Activated CD4-positive, alpha-beta memory T cell treated with anti-CD3 and anti-CD28 coated beads for 36 hours (primary cell): ENCODE measurements at regions of chr7 and their contacts with region 1.

Region 1: DNA sequence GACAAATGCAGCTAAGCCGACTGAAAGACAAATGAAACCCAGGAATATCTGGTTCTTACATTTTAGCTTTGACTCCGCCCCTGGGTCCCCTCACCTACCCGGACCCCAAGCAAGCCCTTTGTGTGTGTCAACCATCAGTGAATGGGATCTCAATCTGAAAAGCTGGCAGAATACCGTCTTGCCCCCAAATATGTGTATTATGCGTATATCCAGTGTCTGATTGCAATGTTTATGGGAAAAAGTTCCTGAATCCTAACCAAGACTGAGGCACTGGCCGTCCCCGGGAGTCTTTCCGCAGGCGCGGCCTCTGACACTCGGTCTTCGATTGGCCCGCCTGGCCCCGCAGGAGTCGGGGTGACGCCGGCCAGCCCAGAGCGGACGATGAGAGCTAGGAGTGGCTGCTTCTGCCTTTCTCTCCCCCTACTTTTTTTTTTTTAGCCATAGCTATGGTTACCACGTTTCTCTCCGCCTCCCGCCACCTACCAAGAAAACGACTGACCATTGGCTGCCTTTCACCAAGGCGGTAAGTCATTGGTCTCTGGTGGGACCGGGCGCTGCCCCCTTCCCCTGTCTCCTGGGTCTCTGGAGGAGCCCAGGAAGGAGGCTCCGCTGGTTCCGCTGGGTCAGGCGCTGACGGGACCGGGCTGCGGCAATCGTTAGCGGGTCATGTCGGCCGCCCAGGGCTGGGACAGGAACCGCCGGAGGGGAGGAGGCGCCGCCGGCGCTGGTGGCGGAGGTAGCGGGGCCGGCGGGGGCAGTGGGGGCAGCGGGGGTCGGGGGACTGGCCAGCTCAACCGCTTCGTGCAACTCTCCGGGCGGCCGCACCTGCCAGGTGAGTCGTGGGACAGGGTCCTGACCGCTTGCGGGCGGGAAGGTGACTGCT is at the start of gene KLHDC10:
- DNase-seq: peak; percentile 97
- H3K4me3 Mint-ChIP-seq: peak within 1 kb of the TSS; percentile 75
- H3K27ac Mint-ChIP-seq: peak within 1 kb of the TSS; percentile 66
- H3K4me1 Mint-ChIP-seq: peaks cover 31% of the 10 kb centered on the region
- H3K27me3 Mint-ChIP-seq: no peaks in the 10 kb centered on the region
- total RNA-seq, gene KLHDC10: 16.4 to 16.8 TPM

Region 2: DNA sequence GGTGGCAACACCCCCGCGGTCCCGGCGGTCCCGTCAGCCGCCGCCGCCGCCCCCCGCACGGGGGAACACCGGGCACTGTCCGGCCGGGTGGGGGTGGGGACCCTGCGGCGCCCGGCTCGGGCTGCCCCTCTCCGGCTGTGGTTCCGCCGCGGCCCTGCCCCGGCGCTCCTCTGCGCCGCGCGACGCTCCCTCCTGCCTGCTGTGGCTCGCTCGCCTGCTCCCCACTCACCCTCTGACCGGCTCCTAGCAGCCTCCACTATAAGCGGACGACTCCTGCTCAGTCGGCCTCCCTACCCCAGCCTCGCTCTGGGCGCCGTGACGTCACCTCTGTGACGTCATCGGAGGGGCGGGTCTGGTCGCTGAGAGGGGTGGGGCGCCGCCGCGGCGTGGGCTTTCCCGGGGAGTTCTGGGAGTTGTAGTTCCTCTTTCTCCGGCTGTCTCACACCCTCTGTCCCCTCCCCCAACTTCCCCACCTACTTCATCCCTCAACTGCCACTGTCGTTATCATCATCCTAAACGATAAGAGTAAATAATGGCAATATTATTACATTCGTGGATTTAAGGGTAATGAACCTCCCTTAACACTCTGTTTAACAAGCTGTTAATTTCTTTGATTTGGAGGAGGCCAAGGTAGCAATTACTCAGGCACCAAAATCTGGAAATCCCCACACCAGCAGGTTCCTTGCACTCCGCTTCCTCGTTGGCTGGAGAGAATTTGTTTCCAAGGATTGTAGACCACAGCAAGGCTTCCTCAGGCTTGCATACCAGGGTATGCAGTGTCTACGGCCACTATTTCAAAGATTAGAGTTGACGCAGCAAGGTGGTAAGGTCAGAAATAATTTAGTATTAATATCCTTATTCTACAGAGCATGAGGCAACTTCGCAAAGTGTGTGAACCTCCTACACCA is 117.3 kb before region 1 on chr7 and contains the start of gene UBE2H:
- CTCF ChIA-PET with region 1: no interaction called
- POLR2A ChIA-PET with region 1: no interaction called
- intact Hi-C with region 1: loop called (anchors 5 kb)
- DNase-seq: peak; percentile 94
- H3K4me3 Mint-ChIP-seq: peak within 1 kb of the TSS; percentile 87
- H3K27ac Mint-ChIP-seq: peak within 1 kb of the TSS; percentile 90
- H3K4me1 Mint-ChIP-seq: peaks cover 7% of the 10 kb centered on the region
- H3K27me3 Mint-ChIP-seq: no peaks in the 10 kb centered on the region
- total RNA-seq, gene UBE2H: 33.6 to 37.1 TPM

Region 3: DNA sequence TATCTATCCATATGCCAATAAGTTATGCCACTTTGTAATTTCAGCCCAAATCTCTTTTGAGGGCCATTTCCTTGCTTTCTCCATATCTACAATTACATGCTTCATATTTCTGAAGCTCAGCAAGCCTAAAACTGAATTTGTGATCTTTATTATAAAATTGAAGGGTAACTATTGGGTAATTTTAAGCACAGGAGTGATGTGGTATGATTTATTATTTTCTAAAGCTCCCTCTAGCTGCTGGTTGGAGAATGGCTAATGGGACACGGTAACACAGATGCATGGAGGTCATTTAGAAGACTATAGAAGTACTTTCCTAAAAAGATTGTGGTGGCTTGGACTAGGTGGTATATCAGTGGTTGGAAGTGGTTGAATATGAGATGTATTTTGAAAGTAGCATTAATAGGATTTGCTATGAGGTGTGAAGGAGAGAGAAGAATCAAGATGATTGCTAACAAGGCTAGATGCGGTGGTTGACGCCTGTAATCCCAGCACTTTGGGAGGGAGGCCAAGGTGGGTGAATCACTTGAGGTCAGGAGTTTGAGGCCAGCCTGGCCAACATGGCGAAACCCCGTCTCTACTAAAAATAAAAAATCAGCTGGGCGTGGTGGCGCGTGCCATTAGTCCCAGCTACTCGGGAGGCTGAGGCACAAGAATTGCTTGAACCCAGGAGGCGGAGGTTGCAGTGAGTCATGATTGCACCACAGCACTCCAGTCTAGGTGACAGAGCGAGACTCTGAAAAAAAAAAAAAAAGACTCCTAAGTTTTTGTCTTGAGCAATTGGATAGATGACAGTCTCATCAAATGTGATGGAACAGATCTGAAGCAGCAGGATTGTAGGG is 14.0 kb after region 1 on chr7:
- CTCF ChIA-PET with region 1: interaction called, 15 read pairs
- POLR2A ChIA-PET with region 1: no interaction called
- intact Hi-C with region 1: no loop called
- DNase-seq: no peak
- H3K4me3 Mint-ChIP-seq: no peak overlapping the region
- H3K27ac Mint-ChIP-seq: no peak overlapping the region
- H3K4me1 Mint-ChIP-seq: peaks cover 18% of the 10 kb centered on the region
- H3K27me3 Mint-ChIP-seq: no peaks in the 10 kb centered on the region

Region 4: DNA sequence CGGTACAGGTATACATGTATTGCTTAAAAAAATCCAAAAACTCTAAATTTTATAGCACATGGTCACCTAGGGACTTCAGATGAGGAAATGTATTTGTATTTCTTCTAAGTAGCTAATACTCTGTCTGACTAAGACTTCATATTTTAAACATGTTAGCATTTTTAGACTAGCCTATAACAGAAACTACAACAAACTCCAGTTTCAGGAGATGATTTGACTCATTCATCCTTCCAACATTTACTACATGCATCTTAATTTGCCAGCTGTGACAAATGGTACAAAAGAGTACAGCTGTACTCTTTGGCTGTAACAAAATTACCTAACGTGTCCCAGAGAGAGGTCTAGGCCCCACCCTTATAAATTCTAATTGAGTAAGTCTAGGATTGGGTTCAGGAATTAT is 112.8 kb after region 1 on chr7:
- CTCF ChIA-PET with region 1: interaction called, 9 read pairs
- POLR2A ChIA-PET with region 1: no interaction called
- intact Hi-C with region 1: loop called (anchors 1 kb)
- DNase-seq: no peak
- H3K4me3 Mint-ChIP-seq: no peak overlapping the region
- H3K27ac Mint-ChIP-seq: peak overlapping the region; percentile 62
- H3K4me1 Mint-ChIP-seq: peaks cover 35% of the 10 kb centered on the region
- H3K27me3 Mint-ChIP-seq: no peaks in the 10 kb centered on the region

Region 5: DNA sequence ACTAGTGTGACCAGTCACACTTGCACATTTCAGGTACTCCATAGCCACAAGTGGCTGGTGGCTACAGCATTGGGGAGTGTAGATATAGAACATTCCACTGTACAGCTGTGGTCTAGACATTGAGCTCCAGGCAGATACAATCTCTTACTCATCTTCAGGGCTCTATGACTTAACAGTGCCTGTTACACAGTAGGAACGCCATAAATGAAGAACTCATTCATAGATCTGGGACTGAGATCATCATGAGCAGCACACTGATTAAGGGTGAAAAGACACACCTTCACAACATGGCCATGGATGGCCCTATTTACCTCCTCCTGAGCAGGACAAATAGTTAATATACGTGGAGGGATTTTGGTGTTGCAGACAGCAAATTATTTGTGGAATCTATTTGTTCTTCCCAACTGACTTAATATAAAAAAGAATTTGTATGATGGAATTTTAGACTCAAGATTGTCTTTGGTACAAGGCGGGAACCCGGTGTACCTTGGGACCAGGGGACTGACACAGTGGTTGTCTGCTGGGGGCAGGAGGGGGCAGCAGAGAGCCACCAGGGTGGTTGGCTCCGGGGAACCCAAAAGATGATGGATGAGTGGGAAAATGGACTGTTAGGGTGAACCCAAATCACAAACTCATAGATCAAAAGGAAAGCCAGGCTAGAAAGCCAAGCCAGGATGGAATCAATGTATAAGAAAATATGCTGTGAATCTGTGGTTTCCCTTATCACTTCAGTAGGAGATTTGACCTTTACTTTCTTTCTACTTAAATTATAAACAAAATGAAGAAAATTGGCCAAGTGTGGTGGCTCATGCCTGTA is 172.2 kb after region 1 on chr7:
- CTCF ChIA-PET with region 1: interaction called, 10 read pairs
- POLR2A ChIA-PET with region 1: no interaction called
- intact Hi-C with region 1: loop called (anchors 1 kb)
- DNase-seq: peak; percentile 73
- H3K4me3 Mint-ChIP-seq: no peak overlapping the region
- H3K27ac Mint-ChIP-seq: no peak overlapping the region
- H3K4me1 Mint-ChIP-seq: peaks cover 12% of the 10 kb centered on the region
- H3K27me3 Mint-ChIP-seq: peaks cover 4% of the 10 kb centered on the region

Region 6: GRCh38 chr7:130486114-130486958 is 416.1 kb after region 1 on chr7:
- CTCF ChIA-PET with region 1: interaction called, 3 read pairs
- POLR2A ChIA-PET with region 1: no interaction called
- intact Hi-C with region 1: loop called (anchors 5 kb)
- DNase-seq: peak; percentile 65
- H3K4me3 Mint-ChIP-seq: peak overlapping the region; percentile 63
- H3K27ac Mint-ChIP-seq: no peak overlapping the region
- H3K4me1 Mint-ChIP-seq: peaks cover 17% of the 10 kb centered on the region
- H3K27me3 Mint-ChIP-seq: peaks cover 56% of the 10 kb centered on the region

Region 7: DNA sequence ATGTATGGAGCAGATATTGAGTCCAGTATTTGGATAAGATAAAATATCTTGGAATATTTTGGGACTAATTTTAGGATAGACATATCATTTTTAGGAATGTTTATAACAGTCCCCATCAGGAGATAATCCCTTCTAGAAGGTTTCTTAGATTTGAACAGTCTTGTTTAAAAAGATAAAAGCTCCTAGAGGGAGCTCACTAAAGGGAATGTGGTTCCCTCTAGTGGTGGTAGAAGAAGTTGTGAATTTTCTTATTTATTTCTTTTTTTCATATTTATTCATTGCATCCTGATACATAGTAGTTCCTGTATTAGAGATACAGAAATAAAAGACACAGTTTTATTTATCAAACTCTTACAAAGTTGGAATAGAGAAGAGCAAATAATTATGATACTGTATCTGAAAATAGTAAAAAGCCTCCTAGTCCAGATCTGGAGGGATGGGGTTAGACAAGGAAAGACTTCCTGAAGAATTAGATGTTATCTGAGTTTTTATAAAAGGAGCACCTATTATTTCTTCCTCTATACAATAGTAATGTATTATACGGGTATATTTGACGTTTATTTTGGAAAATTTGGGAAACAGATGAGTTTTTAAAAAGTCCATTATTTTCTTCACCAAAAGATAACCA is 688.3 kb after region 1 on chr7:
- CTCF ChIA-PET with region 1: interaction called, 34 read pairs
- POLR2A ChIA-PET with region 1: no interaction called
- intact Hi-C with region 1: loop called (anchors 1 kb)
- DNase-seq: no peak
- H3K4me3 Mint-ChIP-seq: no peak overlapping the region
- H3K27ac Mint-ChIP-seq: no peak overlapping the region
- H3K4me1 Mint-ChIP-seq: no peaks in the 10 kb centered on the region
- H3K27me3 Mint-ChIP-seq: peaks cover 7% of the 10 kb centered on the region